GM23248 (cell line): ENCODE measurements at regions of chr4 and their contacts with region 1.

Region 1: DNA sequence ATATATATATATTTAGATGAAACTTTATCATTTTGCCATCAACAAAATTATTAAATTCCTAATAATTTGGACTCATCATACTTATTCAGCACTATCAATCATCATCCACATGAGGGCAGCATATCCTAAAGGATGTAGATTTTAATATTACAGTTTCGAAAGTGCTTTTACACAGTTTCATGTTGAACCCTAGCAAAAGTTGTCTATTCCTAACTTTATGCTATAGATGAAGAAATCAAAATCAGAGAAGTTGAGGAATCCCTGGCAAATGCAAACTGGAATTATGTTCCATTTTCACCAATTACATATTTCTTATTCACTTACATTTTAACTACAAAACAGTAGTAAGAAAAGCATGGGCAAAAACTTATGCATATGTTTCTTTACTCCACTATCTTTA is 36.6 kb upstream of the UGT2A1 start:
- DNase-seq: peak; percentile 57
- H3K4me3 ChIP-seq: no peak overlapping the region
- H3K27ac ChIP-seq: no peak overlapping the region
- H3K4me1 ChIP-seq: no peaks in the 10 kb centered on the region
- H3K27me3 ChIP-seq: no peaks in the 10 kb centered on the region

Region 2: DNA sequence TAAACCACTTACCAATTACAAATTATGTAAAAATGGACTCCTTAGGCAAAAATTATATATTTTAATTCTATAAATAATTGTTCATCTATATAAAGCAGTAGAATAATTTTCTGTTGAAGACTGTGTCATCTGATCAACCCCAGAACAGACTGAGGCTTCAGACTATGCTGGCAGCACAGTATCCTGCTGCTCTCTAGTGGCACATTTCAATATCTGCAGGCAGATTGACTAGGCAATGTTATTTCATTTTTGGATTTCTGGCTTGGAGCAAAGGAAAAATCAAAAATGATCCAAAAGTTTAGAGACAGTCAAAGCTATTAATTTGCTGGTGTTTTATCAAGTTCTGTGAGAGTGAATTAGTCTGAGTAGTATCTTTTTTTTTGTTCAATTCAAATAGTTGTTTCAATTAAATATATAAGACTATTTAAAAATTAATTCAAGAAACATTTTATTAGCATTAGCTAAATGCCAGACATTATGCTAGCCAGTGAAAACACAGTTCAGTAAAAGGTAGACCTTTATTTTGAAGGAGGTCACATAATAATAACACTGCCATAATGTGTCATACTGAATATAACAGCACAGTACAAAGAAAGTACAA is 191.7 kb after region 1 on chr4:
- in situ Hi-C with region 1: loop called (anchors 5 kb)
- DNase-seq: peak; percentile 77
- H3K4me3 ChIP-seq: no peak overlapping the region
- H3K27ac ChIP-seq: no peak overlapping the region
- H3K4me1 ChIP-seq: no peaks in the 10 kb centered on the region
- H3K27me3 ChIP-seq: no peaks in the 10 kb centered on the region

Region 3: DNA sequence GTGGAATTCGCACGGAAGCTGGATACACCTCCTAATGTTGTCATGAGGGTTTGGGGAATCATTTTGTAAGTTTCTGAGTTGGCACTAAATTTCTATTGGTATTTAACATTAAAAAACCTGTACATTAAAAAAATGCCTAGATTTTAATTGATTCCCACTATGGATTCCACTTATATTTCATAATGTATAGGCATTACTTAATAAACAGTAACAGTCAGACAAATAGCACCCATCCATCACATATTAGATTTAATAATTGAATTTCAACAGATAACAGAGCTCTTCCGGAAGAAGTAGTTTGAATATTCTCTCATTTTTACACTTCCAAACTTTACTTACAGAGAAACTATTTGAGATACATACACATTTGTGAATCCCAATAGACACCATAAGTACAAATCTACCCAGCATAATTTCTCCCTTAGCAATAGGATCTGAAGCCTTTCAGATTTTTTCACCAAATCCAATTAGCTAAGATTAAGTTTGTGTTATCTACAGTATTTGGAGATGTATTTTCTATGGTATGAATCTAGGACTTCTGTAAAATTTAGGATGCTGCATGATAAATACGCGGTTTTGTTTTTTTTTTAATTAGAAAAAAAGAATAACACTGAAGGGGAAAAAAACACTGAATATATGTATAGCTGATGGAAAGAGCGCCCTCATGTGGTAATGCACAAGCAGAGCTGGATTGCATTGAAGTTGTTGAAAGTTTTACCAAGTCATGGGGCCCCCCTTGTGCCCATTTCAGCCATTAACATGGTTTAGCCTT is 493.8 kb after region 1 on chr4:
- in situ Hi-C with region 1: loop called (anchors 25 kb)
- DNase-seq: peak; percentile 74
- H3K4me3 ChIP-seq: no peak overlapping the region
- H3K27ac ChIP-seq: no peak overlapping the region
- H3K4me1 ChIP-seq: no peaks in the 10 kb centered on the region
- H3K27me3 ChIP-seq: no peaks in the 10 kb centered on the region

Region 4: GRCh38 chr4:70505151-70505748 is 815.7 kb after region 1 on chr4:
- in situ Hi-C with region 1: loop called (anchors 25 kb)
- DNase-seq: peak; percentile 71
- H3K4me3 ChIP-seq: no peak overlapping the region
- H3K27ac ChIP-seq: no peak overlapping the region
- H3K4me1 ChIP-seq: no peaks in the 10 kb centered on the region
- H3K27me3 ChIP-seq: no peaks in the 10 kb centered on the region